Heart right ventricle (tissue), 16 donors: ENCODE measurements at regions of chr7 and their contacts with region 1.

Region 1: GRCh38 chr7:18313965-18314364 is 181.6 kb upstream of the HDAC9 start:
- DNase-seq: no peak
- ATAC-seq: no peak
- H3K4me3 ChIP-seq: no peak overlapping the region
- H3K27ac ChIP-seq: no peak overlapping the region
- H3K4me1 ChIP-seq: peaks cover 0 to 10% (median 8%) of the 10 kb centered on the region in 9 donors
- H3K27me3 ChIP-seq: no peaks in the 10 kb centered on the region
- CTCF ChIP-seq: no peak

Region 2: DNA sequence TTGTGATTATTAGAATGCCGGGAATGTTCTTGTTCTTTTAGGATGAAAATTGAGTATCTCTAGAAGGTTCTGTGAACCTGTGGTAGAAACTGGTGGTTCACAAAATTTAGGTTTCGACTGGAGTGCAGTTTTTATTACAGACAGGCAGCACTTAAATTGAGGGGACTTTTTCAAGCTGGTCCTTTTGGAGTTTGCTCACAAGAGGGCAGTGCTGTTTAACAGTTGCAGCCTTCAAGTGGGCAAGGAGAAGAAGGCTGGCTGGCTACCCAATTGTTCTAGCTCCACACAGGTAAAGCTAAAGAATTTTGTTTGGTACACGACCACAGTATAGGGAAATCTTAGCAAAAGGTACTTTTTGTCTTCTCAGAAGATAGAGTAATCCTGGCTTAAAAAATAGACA is 607.2 kb before region 1 on chr7:
- intact Hi-C with region 1: loop called in 1 of 10 experiments (anchors 10 kb)
- DNase-seq: peak in 1 of 2 donors; percentile 43
- ATAC-seq: peak in 6 of 8 donors; percentile 50 to 78 (median 64)
- H3K4me3 ChIP-seq: no peak overlapping the region
- H3K27ac ChIP-seq: no peak overlapping the region
- H3K4me1 ChIP-seq: no peaks in the 10 kb centered on the region
- H3K27me3 ChIP-seq: no peaks in the 10 kb centered on the region
- CTCF ChIP-seq: peak; percentile 17 to 72 (median 58)

Region 3: DNA sequence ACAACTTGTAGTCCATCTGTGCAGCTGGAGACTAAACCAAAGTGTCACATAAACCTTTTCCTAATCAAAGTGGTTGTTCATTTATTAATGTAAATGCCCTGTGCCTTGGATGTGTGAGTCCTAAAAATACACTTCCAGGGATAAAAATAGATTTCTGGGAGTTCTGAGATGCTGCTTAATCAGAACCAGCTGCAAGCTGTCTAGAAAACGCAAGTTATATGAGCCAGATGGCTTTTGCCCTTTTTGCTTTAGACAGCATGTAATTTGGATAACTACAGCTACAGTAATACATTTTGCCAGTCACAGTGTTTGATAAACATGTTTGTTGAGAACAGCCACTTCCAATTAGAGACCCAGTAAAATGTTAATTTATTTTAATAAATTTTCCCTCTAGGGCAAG is 101.2 kb before region 1 on chr7:
- intact Hi-C with region 1: loop called in 1 of 10 experiments (anchors 10 kb)
- DNase-seq: no peak
- ATAC-seq: peak; percentile 49 to 92 (median 76)
- H3K4me3 ChIP-seq: no peak overlapping the region
- H3K27ac ChIP-seq: peak overlapping the region in 6 of 10 donors; percentile 5 to 66 (median 46)
- H3K4me1 ChIP-seq: peaks cover 0 to 31% (median 18%) of the 10 kb centered on the region in 9 donors
- H3K27me3 ChIP-seq: no peaks in the 10 kb centered on the region
- CTCF ChIP-seq: no peak